Dendritic cell treated with granulocyte-macrophage colony-stimulating factor and Interleukin-4, amounts not matched to agents 40 ng/mL and 50 ng/mL, for 4 days (primary cell): ENCODE measurements at regions of chr1 and their contacts with region 1.

Region 1: GRCh38 chr1:31564134-31564989 is 12.0 kb upstream of the TINAGL1 start:
- H3K4me3 Mint-ChIP-seq: no peak overlapping the region
- H3K27ac Mint-ChIP-seq: no peak overlapping the region
- H3K4me1 Mint-ChIP-seq: no peaks in the 10 kb centered on the region
- H3K27me3 Mint-ChIP-seq: peaks cover 30% of the 10 kb centered on the region

Region 2: DNA sequence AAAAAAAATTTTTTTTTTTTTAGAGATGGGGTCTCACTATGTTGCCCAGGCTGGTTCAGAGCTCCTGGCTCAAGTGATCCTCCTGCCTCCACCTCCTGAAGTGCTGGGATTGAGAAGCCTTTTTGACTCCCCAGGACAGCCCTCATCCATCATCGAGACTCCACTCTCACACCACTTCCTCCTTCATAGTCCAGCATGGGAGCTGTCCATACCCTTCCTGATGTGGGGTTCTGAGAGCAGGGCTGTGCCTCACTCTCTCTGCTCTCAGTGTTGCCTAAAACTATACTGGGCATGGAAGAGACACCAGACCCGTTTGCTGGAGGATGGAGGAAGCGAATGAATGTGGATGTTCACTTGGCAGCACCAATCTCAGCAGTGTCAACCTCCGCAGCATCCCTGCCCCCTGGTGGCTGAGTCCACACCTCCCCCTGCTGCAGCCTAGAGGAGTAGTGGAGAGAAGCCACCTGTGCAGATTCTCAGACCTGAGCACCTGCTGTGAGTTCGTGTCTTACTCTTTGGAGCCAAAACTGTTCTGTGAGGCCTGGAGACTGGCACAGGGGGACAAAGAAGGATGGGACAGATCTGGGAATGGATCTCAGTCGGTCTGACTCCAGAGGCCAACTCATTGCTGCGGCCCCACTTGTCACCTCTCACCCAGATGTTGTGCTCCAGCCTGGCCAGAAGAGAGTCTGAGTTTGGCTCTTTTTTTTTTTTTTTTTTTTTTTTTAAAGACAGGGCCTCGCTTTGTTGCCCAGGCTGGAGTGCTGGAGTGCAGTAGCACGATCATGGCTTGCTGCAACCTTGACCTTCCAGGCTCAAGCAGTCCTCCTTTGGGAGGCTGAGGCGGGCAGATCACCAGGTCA is 29.6 kb after region 1 on chr1:
- intact Hi-C with region 1: loop called (anchors 2 kb)
- H3K4me3 Mint-ChIP-seq: no peak overlapping the region
- H3K27ac Mint-ChIP-seq: no peak overlapping the region
- H3K4me1 Mint-ChIP-seq: peaks cover 26% of the 10 kb centered on the region
- H3K27me3 Mint-ChIP-seq: peaks cover 37% of the 10 kb centered on the region

Region 3: GRCh38 chr1:31617917-31618660 is 53.7 kb after region 1 on chr1:
- intact Hi-C with region 1: loop called (anchors 1 kb)
- H3K4me3 Mint-ChIP-seq: peak overlapping the region; percentile 28
- H3K27ac Mint-ChIP-seq: no peak overlapping the region
- H3K4me1 Mint-ChIP-seq: peaks cover 61% of the 10 kb centered on the region
- H3K27me3 Mint-ChIP-seq: peaks cover 37% of the 10 kb centered on the region